IMR-90 (cell line): ENCODE measurements at regions of chr4 and their contacts with region 1.

Region 1: GRCh38 chr4:173257732-173258717 is 76.1 kb downstream of the HMGB2 start:
- DNase-seq: peak; percentile 74
- ATAC-seq: peak; percentile 98
- H3K4me3 ChIP-seq: no peak overlapping the region
- H3K27ac ChIP-seq: no peak overlapping the region
- H3K4me1 ChIP-seq: no peaks in the 10 kb centered on the region
- H3K27me3 ChIP-seq: peaks cover 2% of the 10 kb centered on the region
- CTCF ChIP-seq: peak; percentile 88
- POLR2A ChIP-seq: no peak; the same call in 1 of the 2 replicates
- RAD21 ChIP-seq: peak; percentile 96

Region 2: GRCh38 chr4:172830295-172830764 is 427.7 kb before region 1 on chr4:
- CTCF ChIA-PET with region 1: no interaction called
- POLR2A ChIA-PET with region 1: no interaction called
- dilution Hi-C with region 1: no loop called
- in situ Hi-C with region 1: no loop called
- intact Hi-C with region 1: loop called (anchors 5 kb)
- DNase-seq: peak; percentile 21
- ATAC-seq: peak; percentile 44
- H3K4me3 ChIP-seq: no peak overlapping the region
- H3K27ac ChIP-seq: no peak overlapping the region
- H3K4me1 ChIP-seq: peaks cover 4% of the 10 kb centered on the region; the same call in 1 of the 2 replicates
- H3K27me3 ChIP-seq: no peaks in the 10 kb centered on the region
- CTCF ChIP-seq: peak; percentile 51
- POLR2A ChIP-seq: no peak
- RAD21 ChIP-seq: peak; percentile 61

Region 3: GRCh38 chr4:172892300-172892699 is 365.7 kb before region 1 on chr4:
- CTCF ChIA-PET with region 1: no interaction called
- POLR2A ChIA-PET with region 1: no interaction called
- dilution Hi-C with region 1: no loop called
- in situ Hi-C with region 1: no loop called
- intact Hi-C with region 1: loop called (anchors 10 kb)
- DNase-seq: peak; percentile 3
- ATAC-seq: no peak
- H3K4me3 ChIP-seq: no peak overlapping the region
- H3K27ac ChIP-seq: no peak overlapping the region
- H3K4me1 ChIP-seq: no peaks in the 10 kb centered on the region
- H3K27me3 ChIP-seq: no peaks in the 10 kb centered on the region
- CTCF ChIP-seq: peak; percentile 37
- POLR2A ChIP-seq: no peak
- RAD21 ChIP-seq: peak; percentile 28; the same call in 1 of the 2 replicates

Region 4: DNA sequence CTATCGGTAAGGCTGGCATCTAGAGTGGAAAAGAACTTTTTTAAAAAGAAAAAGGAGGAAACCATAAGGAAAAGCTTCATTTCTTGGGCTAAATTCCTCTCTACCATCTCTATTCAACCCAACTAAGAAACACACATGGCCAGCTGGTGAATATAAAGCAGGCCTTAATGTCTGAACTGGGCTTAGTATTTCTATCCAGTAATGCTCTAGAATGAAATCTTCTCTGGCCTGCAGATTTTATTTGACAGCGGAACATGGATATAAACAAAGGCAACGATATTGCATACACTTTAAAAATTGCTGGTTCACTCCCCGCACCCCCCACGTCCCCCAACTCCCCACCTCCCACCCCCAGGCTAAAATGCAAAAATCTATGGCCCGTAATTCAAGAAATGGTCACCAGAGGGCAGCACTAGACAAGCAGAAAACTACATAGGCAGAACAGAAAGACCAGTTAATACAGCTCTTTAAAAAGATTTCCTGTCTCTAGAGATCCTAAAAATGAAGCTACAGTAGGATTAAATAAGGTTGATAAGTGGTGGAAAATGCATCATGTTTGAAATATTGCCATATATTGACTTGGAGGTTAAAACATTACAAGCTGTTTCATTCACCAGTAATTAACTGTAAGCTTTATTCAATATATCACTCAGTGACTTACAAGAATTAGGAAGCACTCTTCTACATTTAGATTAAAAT is 244.6 kb before region 1 on chr4:
- CTCF ChIA-PET with region 1: interaction called, 26 read pairs
- POLR2A ChIA-PET with region 1: no interaction called
- dilution Hi-C with region 1: loop called (anchors 25 kb)
- in situ Hi-C with region 1: no loop called
- intact Hi-C with region 1: loop called (anchors 1 kb)
- DNase-seq: peak; percentile 48
- ATAC-seq: peak; percentile 63
- H3K4me3 ChIP-seq: no peak overlapping the region
- H3K27ac ChIP-seq: no peak overlapping the region
- H3K4me1 ChIP-seq: peaks cover 1% of the 10 kb centered on the region; the same call in 1 of the 2 replicates
- H3K27me3 ChIP-seq: peaks cover 7% of the 10 kb centered on the region
- CTCF ChIP-seq: peak; percentile 63
- POLR2A ChIP-seq: no peak
- RAD21 ChIP-seq: peak; percentile 74

Region 5: DNA sequence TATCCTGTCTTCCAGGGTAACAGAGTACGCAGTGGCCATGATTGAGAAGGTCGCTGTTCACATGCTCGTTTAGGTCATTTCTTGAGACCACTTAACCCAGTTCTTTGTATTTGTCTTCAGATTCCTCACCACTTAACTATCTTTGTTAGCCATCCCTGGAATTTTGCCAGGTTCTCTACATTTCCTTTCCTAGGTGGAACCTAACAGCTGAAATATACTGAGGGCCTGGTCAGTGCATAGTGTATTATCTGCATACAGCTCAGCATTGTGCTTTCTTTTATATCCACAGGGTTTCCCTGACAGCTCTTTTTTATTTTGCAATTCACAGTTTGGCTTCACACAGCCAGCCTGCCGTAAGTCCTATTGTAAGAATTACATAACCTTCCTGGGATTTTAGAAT is 238.3 kb before region 1 on chr4:
- CTCF ChIA-PET with region 1: interaction called, 12 read pairs
- POLR2A ChIA-PET with region 1: no interaction called
- dilution Hi-C with region 1: loop called (anchors 25 kb)
- in situ Hi-C with region 1: loop called (anchors 5 kb)
- intact Hi-C with region 1: no loop called
- DNase-seq: no peak
- ATAC-seq: no peak
- H3K4me3 ChIP-seq: no peak overlapping the region
- H3K27ac ChIP-seq: no peak overlapping the region
- H3K4me1 ChIP-seq: no peaks in the 10 kb centered on the region
- H3K27me3 ChIP-seq: peaks cover 22% of the 10 kb centered on the region
- CTCF ChIP-seq: no peak
- POLR2A ChIP-seq: no peak
- RAD21 ChIP-seq: no peak

Region 6: GRCh38 chr4:173025131-173025530 is 232.9 kb before region 1 on chr4:
- CTCF ChIA-PET with region 1: interaction called, 12 read pairs
- POLR2A ChIA-PET with region 1: no interaction called
- dilution Hi-C with region 1: loop called (anchors 25 kb)
- in situ Hi-C with region 1: loop called (anchors 5 kb)
- intact Hi-C with region 1: loop called (anchors 1 kb)
- DNase-seq: peak; percentile 77
- ATAC-seq: peak; percentile 90
- H3K4me3 ChIP-seq: no peak overlapping the region
- H3K27ac ChIP-seq: no peak overlapping the region
- H3K4me1 ChIP-seq: no peaks in the 10 kb centered on the region
- H3K27me3 ChIP-seq: peaks cover 14% of the 10 kb centered on the region
- CTCF ChIP-seq: peak; percentile 87
- POLR2A ChIP-seq: no peak
- RAD21 ChIP-seq: peak; percentile 85

Region 7: GRCh38 chr4:173301518-173302201 is 43.6 kb after region 1 on chr4:
- CTCF ChIA-PET with region 1: interaction called, 6 read pairs
- POLR2A ChIA-PET with region 1: no interaction called
- dilution Hi-C with region 1: no loop called
- in situ Hi-C with region 1: no loop called
- intact Hi-C with region 1: loop called (anchors 2 kb)
- DNase-seq: peak; percentile 66
- ATAC-seq: peak; percentile 75
- H3K4me3 ChIP-seq: no peak overlapping the region
- H3K27ac ChIP-seq: no peak overlapping the region
- H3K4me1 ChIP-seq: no peaks in the 10 kb centered on the region
- H3K27me3 ChIP-seq: no peaks in the 10 kb centered on the region
- CTCF ChIP-seq: peak; percentile 74
- POLR2A ChIP-seq: no peak
- RAD21 ChIP-seq: peak; percentile 63